ENCODE measurements at regions of chr20 and their contacts with region 1.

Region 1: DNA sequence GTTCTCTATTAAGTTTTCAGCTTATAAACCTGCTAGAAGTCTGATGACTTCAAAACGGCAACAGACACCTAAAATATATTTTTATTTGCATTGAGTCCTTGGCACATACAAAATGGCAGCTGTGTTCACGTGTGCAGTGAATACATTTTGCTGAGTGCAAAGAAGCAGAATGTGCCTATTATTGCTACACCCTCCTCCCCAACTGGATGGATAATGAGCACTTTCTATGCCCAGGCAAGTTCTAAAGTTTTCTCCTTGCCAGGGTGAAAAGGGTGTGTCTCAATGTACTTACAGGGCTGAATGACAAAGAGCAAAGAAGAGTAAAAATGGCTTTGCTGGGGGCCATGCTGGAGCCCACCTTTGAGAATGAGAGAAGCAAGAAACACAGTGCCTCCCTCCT is 4.0 kb upstream of the FERMT1 start:
- DNase-seq: no peak
- H3K4me3 ChIP-seq: no peak overlapping the region
- H3K27ac ChIP-seq: no peak overlapping the region
- H3K4me1 ChIP-seq: peaks cover 0 to 6% (median 3%) of the 10 kb centered on the region in 4 experiments; a peak in 5 of 7 replicates
- H3K27me3 ChIP-seq: peaks cover 0 to 6% (median 3%) of the 10 kb centered on the region in 4 experiments; a peak in 4 of 7 replicates
- CTCF ChIP-seq: no peak
- EP300 ChIP-seq: no peak
- POLR2A ChIP-seq: no peak
- RAD21 ChIP-seq: no peak

Region 2: DNA sequence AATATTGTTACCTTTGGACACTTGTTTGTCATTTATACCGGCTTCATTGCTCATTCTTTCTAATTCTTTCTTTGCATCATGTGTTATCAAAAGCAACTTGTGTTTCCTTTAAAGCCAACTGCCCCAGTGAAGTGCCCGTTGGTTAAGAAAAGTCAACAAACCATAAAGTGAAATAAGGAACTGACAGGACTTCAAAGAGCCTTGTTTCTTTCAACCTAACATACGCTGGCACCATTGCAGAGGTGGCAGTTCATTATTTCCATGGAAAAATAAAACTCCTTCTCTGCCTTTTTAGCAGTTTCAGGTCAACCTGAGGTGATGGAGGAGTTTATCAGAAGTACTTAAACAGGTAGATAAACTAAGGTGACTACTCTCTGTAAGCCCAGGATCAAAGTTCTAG is 32.8 kb before region 1 on chr20:
- CTCF ChIA-PET with region 1: no interaction called
- POLR2A ChIA-PET with region 1: no interaction called
- DNase-seq: no peak
- H3K4me3 ChIP-seq: no peak overlapping the region
- H3K27ac ChIP-seq: no peak overlapping the region
- H3K4me1 ChIP-seq: no peaks in the 10 kb centered on the region
- H3K27me3 ChIP-seq: no peaks in the 10 kb centered on the region
- CTCF ChIP-seq: no peak
- EP300 ChIP-seq: no peak
- POLR2A ChIP-seq: no peak
- RAD21 ChIP-seq: no peak

Region 3: GRCh38 chr20:6140947-6141346 is 14.1 kb after region 1 on chr20:
- CTCF ChIA-PET with region 1: interaction called, 11 read pairs
- POLR2A ChIA-PET with region 1: interaction called, 3 read pairs
- DNase-seq: no peak
- H3K4me3 ChIP-seq: no peak overlapping the region
- H3K27ac ChIP-seq: no peak overlapping the region
- H3K4me1 ChIP-seq: no peaks in the 10 kb centered on the region
- H3K27me3 ChIP-seq: no peaks in the 10 kb centered on the region
- CTCF ChIP-seq: peak; percentile 38 to 58 (median 42); a peak in 3 of 4 replicates
- EP300 ChIP-seq: no peak
- POLR2A ChIP-seq: no peak
- RAD21 ChIP-seq: no peak